ENCODE measurements at regions of chr15 and their contacts with region 1.

Region 1: GRCh38 chr15:74322181-74323076 is 45.0 kb downstream of the CYP11A1 start:
- DNase-seq: peak; percentile 22 to 87 (median 62)
- ATAC-seq: peak; percentile 56 to 86 (median 83)
- H3K4me3 ChIP-seq: no peak overlapping the region
- H3K27ac ChIP-seq: no peak overlapping the region
- H3K4me1 ChIP-seq: no peaks in the 10 kb centered on the region
- H3K27me3 ChIP-seq: no peaks in the 10 kb centered on the region
- CTCF ChIP-seq: peak; percentile 38 to 68 (median 53)

Region 2: GRCh38 chr15:73972984-73973682 is 349.3 kb before region 1 on chr15:
- intact Hi-C with region 1: loop called in 1 of 3 experiments (anchors 10 kb)
- DNase-seq: peak; percentile 71 to 90 (median 85)
- ATAC-seq: peak; percentile 96 to 99 (median 98)
- H3K4me3 ChIP-seq: peak overlapping the region in 1 of 4 donors; percentile 25
- H3K27ac ChIP-seq: no peak overlapping the region
- H3K4me1 ChIP-seq: peaks cover 0 to 6% (median 0%) of the 10 kb centered on the region in 3 donors
- H3K27me3 ChIP-seq: peaks cover 0 to 6% (median 0%) of the 10 kb centered on the region in 4 donors
- CTCF ChIP-seq: peak; percentile 49 to 75 (median 66)

Region 3: GRCh38 chr15:74053941-74054529 is 268.4 kb before region 1 on chr15:
- intact Hi-C with region 1: loop called in 1 of 3 experiments (anchors 10 kb)
- DNase-seq: peak; percentile 53 to 85 (median 69)
- ATAC-seq: peak; percentile 83 to 94 (median 90)
- H3K4me3 ChIP-seq: no peak overlapping the region
- H3K27ac ChIP-seq: no peak overlapping the region
- H3K4me1 ChIP-seq: peaks cover 0 to 11% (median 0%) of the 10 kb centered on the region in 3 donors
- H3K27me3 ChIP-seq: no peaks in the 10 kb centered on the region
- CTCF ChIP-seq: peak; percentile 15 to 35 (median 22)

Region 4: GRCh38 chr15:74127260-74127953 is 195.0 kb before region 1 on chr15:
- intact Hi-C with region 1: loop called in 2 of 3 experiments (anchors 5 to 10 kb)
- DNase-seq: peak; percentile 68 to 100 (median 88)
- ATAC-seq: peak; percentile 94 to 99 (median 98)
- H3K4me3 ChIP-seq: peak overlapping the region in 1 of 4 donors; percentile 36
- H3K27ac ChIP-seq: no peak overlapping the region
- H3K4me1 ChIP-seq: peaks cover 0 to 7% (median 4%) of the 10 kb centered on the region in 3 donors
- H3K27me3 ChIP-seq: peaks cover 0 to 22% (median 4%) of the 10 kb centered on the region in 4 donors
- CTCF ChIP-seq: peak; percentile 93 to 97 (median 97)